ENCODE measurements at regions of chr7 and their contacts with region 1.

Region 1: GRCh38 chr7:12686894-12687717 is at the start of gene ARL4A:
- DNase-seq: peak; percentile 94
- H3K4me3 Mint-ChIP-seq: peak within 1 kb of the TSS; percentile 98
- H3K27ac Mint-ChIP-seq: peak within 1 kb of the TSS; percentile 91
- H3K4me1 Mint-ChIP-seq: peaks cover 47% of the 10 kb centered on the region
- H3K27me3 Mint-ChIP-seq: no peaks in the 10 kb centered on the region
- total RNA-seq, gene ARL4A: 19.1 to 19.8 TPM

Region 2: DNA sequence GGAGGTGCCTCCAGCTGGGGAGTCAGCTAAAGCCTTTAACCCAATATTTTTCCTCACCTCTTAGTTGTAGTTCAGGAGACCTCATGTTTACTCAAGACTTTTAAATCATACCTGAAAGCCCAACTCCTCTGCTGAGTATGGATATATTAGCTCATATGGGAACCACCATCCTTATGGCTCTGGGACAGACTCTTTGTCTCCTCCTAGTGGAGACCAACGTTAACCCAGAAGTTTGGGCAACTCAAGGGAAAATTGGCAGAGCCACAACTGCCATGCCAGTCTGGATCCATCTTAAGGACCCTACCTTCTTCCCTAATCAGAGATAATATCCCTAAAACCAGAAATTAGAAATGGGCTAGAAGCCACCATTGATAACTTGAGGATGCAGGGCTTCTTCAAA is 395.2 kb before region 1 on chr7:
- CTCF ChIA-PET with region 1: no interaction called
- POLR2A ChIA-PET with region 1: no interaction called
- DNase-seq: no peak
- H3K4me3 Mint-ChIP-seq: no peak overlapping the region
- H3K27ac Mint-ChIP-seq: no peak overlapping the region
- H3K4me1 Mint-ChIP-seq: no peaks in the 10 kb centered on the region
- H3K27me3 Mint-ChIP-seq: no peaks in the 10 kb centered on the region

Region 3: GRCh38 chr7:12709733-12710502 is 22.8 kb after region 1 on chr7:
- CTCF ChIA-PET with region 1: interaction called, 15 read pairs
- POLR2A ChIA-PET with region 1: interaction called, 18 read pairs
- DNase-seq: no peak
- H3K4me3 Mint-ChIP-seq: no peak overlapping the region
- H3K27ac Mint-ChIP-seq: no peak overlapping the region
- H3K4me1 Mint-ChIP-seq: peaks cover 3% of the 10 kb centered on the region
- H3K27me3 Mint-ChIP-seq: no peaks in the 10 kb centered on the region

Region 4: DNA sequence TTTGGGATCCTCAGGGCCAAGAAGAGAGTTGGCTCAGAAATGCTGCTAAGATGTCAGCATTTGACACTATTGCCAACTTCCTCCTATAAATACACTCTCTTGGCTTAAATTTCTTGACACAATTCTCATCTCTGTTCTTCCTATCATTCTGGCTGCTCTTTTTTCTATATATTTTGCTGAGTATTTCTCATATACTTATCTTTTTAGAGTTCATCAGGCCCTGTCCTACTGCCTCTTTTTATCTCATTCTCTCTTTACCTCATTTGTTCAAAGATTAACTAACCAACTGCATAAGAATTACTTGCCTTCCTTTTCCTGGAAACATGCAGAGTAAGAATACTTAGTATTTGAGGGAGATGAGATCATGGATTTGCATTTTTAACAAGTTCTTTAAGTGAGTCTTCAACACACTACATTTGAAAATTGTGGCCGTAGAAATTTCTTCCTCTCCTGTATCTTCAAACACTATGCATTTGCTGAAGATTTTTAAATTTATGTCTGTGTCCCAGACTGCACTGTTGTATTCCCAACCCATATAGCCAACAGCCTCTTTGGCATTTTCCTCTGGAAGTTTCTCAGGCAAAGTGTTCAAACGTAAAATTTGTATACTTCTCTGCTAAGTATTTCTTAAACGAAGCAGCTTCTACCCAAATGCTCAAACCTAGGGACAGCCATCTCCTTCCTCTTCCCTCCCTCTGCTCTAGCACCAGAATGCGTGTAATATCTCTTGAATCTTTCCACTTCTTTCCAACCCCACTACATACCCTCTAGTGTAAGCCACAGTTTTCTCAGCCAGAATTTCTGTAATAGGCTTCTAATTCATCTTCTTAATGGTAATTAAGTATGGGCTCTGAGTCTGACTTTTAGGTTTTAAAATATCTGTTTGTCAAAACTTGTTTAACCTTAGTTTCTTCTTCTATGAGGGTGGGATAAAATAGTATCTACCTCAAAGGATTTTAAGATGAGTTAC is 35.8 kb after region 1 on chr7:
- CTCF ChIA-PET with region 1: interaction called, 20 read pairs
- POLR2A ChIA-PET with region 1: interaction called, 46 read pairs
- DNase-seq: no peak
- H3K4me3 Mint-ChIP-seq: no peak overlapping the region
- H3K27ac Mint-ChIP-seq: peak overlapping the region; percentile 94
- H3K4me1 Mint-ChIP-seq: peaks cover 39% of the 10 kb centered on the region
- H3K27me3 Mint-ChIP-seq: no peaks in the 10 kb centered on the region

Region 5: GRCh38 chr7:12737373-12737772 is 50.3 kb after region 1 on chr7:
- CTCF ChIA-PET with region 1: interaction called, 69 read pairs
- POLR2A ChIA-PET with region 1: interaction called, 46 read pairs
- DNase-seq: no peak
- H3K4me3 Mint-ChIP-seq: no peak overlapping the region
- H3K27ac Mint-ChIP-seq: no peak overlapping the region
- H3K4me1 Mint-ChIP-seq: peaks cover 6% of the 10 kb centered on the region
- H3K27me3 Mint-ChIP-seq: no peaks in the 10 kb centered on the region

Region 6: GRCh38 chr7:13834328-13834761 is 1147.2 kb after region 1 on chr7:
- CTCF ChIA-PET with region 1: no interaction called
- POLR2A ChIA-PET with region 1: no interaction called
- DNase-seq: no peak
- H3K4me3 Mint-ChIP-seq: no peak overlapping the region
- H3K27ac Mint-ChIP-seq: no peak overlapping the region
- H3K4me1 Mint-ChIP-seq: no peaks in the 10 kb centered on the region
- H3K27me3 Mint-ChIP-seq: no peaks in the 10 kb centered on the region

Measured in activated CD4-positive, alpha-beta memory T cell treated with anti-CD3 and anti-CD28 coated beads, Interleukin-2, amount 10 ng/mL, durations not matched to agents 7 days and 5 days (primary cell).